ENCODE measurements at regions of chr3 and their contacts with region 1.

Region 1: DNA sequence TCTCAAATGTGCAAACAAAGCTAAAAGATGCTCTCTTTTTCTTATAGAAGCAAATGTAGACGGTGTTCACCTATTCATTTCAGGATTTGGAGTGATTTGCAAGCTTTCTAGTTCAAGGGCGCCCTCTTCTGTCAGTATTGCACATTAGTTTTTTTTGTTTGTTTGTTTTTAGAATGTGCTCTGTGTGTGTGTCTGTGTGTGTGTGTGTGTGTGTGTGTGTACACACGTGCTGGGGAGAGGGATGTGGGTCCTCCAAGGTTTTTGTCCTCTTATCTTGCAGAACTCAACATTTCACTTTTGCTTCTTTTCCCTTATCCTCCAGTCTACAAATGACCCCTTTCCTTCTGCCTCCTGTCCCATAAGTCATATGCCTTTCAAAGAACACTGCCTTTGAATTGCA is 23.5 kb downstream of the DNAH1 start:
- DNase-seq: peak; percentile 71
- H3K4me3 ChIP-seq: no peak overlapping the region
- H3K27ac ChIP-seq: no peak overlapping the region
- H3K27me3 ChIP-seq: no peaks in the 10 kb centered on the region
- CTCF ChIP-seq: peak; percentile 70

Region 2: GRCh38 chr3:52231502-52232293 is 107.9 kb before region 1 on chr3:
- CTCF ChIA-PET with region 1: interaction called, 34 read pairs
- POLR2A ChIA-PET with region 1: no interaction called
- DNase-seq: no peak
- H3K4me3 ChIP-seq: no peak overlapping the region
- H3K27ac ChIP-seq: no peak overlapping the region
- H3K27me3 ChIP-seq: no peaks in the 10 kb centered on the region
- CTCF ChIP-seq: peak; percentile 68

Region 3: GRCh38 chr3:52278510-52279069 is 61.0 kb before region 1 on chr3 and contains the start of gene WDR82:
- CTCF ChIA-PET with region 1: interaction called, 15 read pairs
- POLR2A ChIA-PET with region 1: interaction called, 5 read pairs
- DNase-seq: peak; percentile 74
- H3K4me3 ChIP-seq: peak within 1 kb of the TSS; percentile 99
- H3K27ac ChIP-seq: peak within 1 kb of the TSS; percentile 90
- H3K27me3 ChIP-seq: no peaks in the 10 kb centered on the region
- CTCF ChIP-seq: peak; percentile 53
- polyA plus RNA-seq, gene WDR82: 69.2 and 77.6 TPM in 2 replicates

Region 4: DNA sequence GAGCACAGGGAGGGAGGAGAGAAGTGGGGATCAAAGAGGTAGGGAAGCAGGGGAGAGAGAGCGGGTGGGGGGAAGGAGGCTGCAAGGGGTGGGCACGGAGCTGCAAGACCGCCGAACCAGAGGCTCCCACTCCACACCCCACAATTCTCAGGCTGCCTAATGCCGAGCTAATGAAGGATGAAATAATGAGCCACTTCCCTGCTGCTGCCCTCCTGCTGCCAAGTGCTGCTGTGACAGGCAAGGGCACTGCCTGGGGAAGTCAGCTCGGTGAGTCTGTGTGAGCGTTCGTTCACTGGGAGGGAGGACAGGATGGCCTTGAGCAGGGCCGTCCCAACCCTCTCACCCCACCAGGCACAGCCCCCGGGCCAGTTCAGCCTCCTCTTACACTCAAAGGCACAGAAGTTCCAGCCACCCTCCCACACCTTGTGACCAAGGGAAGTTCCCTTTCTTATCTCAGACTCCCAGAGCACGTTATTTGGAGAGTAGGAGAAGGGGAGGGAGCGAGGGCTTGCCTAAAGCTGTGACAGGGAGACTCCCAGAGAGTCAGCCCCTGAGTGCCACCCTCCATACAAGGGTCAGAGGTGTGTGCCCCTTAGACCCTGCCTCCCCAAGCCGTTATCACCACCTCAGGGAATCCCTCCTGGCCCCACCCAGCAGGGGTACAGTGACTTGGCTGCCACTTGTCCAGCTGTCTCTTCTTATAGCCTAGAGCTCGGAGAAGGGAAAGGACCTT is 39.6 kb before region 1 on chr3:
- CTCF ChIA-PET with region 1: interaction called, 21 read pairs
- POLR2A ChIA-PET with region 1: no interaction called
- DNase-seq: no peak
- H3K4me3 ChIP-seq: no peak overlapping the region
- H3K27ac ChIP-seq: no peak overlapping the region
- H3K27me3 ChIP-seq: peaks cover 3% of the 10 kb centered on the region
- CTCF ChIP-seq: 0 out of 2 replicates have a peak, but pooled peaks have one; percentile 14

Region 5: DNA sequence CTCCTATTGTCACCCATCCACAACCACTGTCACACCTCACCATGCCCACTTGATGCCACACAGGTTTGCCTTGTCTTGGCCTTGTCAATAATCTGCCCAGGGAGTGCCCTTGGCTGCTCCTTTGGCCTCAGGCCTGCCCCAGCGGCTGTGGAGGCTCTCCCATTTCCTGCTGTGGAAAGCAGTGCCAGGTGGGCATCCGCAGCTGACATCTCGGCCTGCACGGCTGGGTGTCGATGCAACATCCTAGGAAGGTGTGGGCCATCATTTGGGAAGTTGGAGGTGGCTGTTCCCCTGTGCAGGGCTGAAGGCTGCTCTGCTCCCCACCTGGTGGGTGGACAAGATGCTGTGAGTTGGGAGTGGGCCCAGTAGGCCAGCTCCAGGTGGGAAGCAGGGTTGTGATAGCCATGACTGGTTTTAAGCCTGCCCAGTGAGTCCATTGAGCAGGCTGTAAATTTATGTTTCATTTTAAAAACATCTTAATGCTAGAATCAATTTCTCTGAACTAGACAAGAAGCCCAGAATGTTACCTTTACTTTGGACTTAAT is 11.0 kb before region 1 on chr3:
- CTCF ChIA-PET with region 1: interaction called, 14 read pairs
- POLR2A ChIA-PET with region 1: no interaction called
- DNase-seq: no peak
- H3K4me3 ChIP-seq: no peak overlapping the region
- H3K27ac ChIP-seq: no peak overlapping the region
- H3K27me3 ChIP-seq: peaks cover 1% of the 10 kb centered on the region
- CTCF ChIP-seq: no peak

Region 6: DNA sequence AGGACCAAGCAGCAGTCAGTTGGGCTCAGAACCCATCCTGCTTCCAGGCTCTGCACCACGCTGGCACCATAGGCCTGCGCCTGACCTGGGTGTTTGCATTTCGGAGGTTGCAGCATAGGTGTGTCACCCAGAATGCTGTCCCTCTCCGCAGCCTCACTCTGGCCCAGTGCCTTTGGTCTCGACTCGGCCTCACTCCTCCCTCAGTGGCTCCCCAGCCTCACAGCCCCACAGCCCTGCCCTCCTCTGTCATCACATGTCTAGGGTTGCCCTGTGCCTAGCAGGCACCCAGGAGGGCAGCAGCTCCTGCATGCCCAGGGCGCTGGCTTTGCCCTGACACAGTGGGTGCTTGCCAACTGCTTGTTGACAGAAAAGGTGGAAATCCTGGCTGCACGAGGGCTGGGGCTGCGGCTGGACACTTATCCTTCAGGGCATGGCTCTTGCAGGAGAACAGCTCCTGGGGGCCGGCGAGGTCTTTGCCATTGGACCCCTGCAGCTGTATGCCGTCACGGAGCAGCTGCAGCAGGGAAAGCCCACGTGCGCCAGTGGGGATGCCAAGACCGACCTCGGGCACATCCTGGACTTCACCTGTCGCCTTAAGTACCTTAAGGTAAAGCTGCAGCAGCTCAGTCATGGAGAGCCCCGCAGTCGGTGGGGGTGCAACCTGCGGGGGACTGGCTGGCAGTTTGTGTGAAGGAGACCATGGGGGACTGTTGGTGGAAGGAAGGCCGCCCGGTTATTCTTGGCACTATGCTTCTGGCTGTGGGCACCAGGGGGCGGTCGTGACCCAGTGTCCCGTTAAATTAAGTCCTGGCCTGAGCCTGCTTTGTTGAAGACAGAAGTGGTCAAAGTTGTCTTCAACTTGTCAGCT is 132.0 kb after region 1 on chr3:
- CTCF ChIA-PET with region 1: no interaction called
- POLR2A ChIA-PET with region 1: no interaction called
- DNase-seq: no peak
- H3K4me3 ChIP-seq: no peak overlapping the region
- H3K27ac ChIP-seq: no peak overlapping the region
- H3K27me3 ChIP-seq: no peaks in the 10 kb centered on the region
- CTCF ChIP-seq: peak; percentile 71

Measured in AG04450 (cell line).